CD4-positive, alpha-beta memory T cell (primary cell): ENCODE measurements at regions of chr3 and their contacts with region 1.

Region 1: DNA sequence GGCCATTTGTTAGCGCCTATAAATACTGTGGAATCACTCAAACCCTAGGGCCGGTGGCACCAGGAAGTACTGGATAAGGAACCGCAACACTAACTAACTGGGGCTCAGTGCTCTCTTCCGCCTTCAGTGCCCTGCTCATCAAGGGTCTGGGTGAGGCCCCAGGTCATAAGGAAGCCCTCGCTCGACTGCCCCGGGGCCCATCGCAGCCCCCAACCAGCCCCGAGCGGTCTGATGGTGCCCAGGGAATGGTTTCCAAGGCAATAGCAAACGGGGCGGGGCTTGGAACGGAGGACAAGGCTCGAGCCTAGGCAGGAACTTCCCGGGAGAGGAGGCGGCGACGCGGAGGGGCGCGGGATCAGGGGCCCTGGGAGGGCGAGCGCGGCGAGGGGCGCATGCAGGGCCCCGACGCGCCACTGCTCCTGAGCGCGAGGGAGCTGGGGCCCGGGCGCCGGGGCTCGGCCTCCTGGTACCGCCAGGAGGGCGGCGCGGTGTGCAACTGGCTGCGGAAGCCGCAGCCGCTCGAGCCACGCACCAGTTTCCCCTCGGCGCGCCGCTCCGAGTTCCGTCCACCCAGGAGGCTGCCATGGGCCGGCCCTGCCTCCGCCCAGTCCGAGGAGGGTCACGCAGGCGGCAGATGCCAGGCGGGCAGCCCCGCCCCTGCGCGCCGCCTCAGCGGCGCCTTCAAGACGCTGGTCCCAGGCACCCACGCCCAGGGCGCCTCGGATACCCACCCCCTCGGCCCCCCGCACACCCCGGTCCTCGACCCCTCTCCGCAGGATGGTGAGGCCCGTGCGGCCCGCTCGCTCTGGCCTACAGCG is at the start of gene TTLL3:
- DNase-seq: peak; percentile 34 to 62 (median 48)
- H3K4me3 ChIP-seq: peak within 1 kb of the TSS; percentile 72
- H3K4me3 Mint-ChIP-seq: peak within 1 kb of the TSS; percentile 91 to 94 (median 92)
- H3K27ac ChIP-seq: peak within 1 kb of the TSS; percentile 74
- H3K27ac Mint-ChIP-seq: peak within 1 kb of the TSS; percentile 87 to 99 (median 98)
- H3K4me1 ChIP-seq: peaks cover 27% of the 10 kb centered on the region
- H3K4me1 Mint-ChIP-seq: peaks cover 35 to 46% (median 41%) of the 10 kb centered on the region in 4 donors
- H3K27me3 ChIP-seq: no peaks in the 10 kb centered on the region
- H3K27me3 Mint-ChIP-seq: no peaks in the 10 kb centered on the region
- total RNA-seq, gene TTLL3: 81.4 to 91.7 TPM

Region 2: DNA sequence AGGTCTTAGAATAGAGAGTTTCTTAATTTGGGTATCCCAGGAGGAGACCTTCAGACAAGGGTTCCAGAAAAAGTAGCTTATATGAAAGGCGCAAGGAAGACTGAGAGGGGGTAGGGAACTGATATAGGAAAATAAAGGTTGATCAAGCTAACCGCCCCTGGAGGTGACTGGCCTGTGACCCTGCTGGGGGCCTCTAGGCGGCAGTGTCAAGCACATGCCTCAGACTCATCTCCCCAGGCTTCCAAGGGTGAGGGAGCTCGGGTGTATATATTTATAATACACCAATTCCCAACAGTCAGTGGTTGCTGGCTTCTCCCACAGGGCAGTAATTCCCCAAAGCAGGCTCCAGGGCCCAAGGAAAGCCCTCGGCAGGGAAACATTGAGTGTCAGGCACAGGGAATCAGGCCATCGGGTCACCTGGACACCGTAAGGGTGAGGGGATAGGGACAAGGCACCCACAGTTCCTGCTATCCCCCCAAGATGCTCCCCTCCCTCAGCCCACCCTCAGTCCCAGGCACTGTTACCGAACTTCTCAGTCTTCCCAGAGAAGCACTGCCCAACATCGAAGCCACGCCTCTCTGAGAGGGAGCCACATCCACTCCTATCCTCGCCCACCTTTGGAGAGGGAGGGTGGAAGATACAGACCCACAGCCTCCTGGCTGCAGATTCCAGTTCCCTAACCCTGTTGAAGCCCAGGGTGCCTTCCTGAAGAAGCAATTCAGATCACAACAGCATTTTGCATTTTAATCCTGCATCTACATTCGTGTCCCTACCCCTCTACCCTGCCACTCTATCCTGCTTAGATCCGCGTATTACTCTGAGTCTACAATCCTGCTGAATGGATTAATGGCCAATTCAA is 1095.7 kb before region 1 on chr3:
- CTCF ChIA-PET with region 1: no interaction called
- POLR2A ChIA-PET with region 1: no interaction called
- intact Hi-C with region 1: no loop called
- DNase-seq: no peak
- H3K4me3 ChIP-seq: no peak overlapping the region
- H3K4me3 Mint-ChIP-seq: no peak overlapping the region
- H3K27ac ChIP-seq: no peak overlapping the region
- H3K27ac Mint-ChIP-seq: no peak overlapping the region
- H3K4me1 ChIP-seq: no peaks in the 10 kb centered on the region
- H3K4me1 Mint-ChIP-seq: no peaks in the 10 kb centered on the region
- H3K27me3 ChIP-seq: no peaks in the 10 kb centered on the region
- H3K27me3 Mint-ChIP-seq: peaks cover 2 to 10% of the 10 kb centered on the region in 2 donors

Region 3: GRCh38 chr3:9749645-9750555 is 59.9 kb before region 1 on chr3 and contains the start of gene OGG1:
- CTCF ChIA-PET with region 1: interaction called, 4 read pairs
- POLR2A ChIA-PET with region 1: interaction called, 17 read pairs
- intact Hi-C with region 1: no loop called
- DNase-seq: peak; percentile 95 to 98 (median 96)
- H3K4me3 ChIP-seq: peak within 1 kb of the TSS; percentile 58 to 92
- H3K4me3 Mint-ChIP-seq: peak within 1 kb of the TSS; percentile 88 to 98 (median 96)
- H3K27ac ChIP-seq: peak within 1 kb of the TSS; percentile 59
- H3K27ac Mint-ChIP-seq: peak within 1 kb of the TSS; percentile 93 to 98 (median 95)
- H3K4me1 ChIP-seq: peaks cover 38% of the 10 kb centered on the region
- H3K4me1 Mint-ChIP-seq: peaks cover 25 to 54% (median 39%) of the 10 kb centered on the region in 4 donors
- H3K27me3 ChIP-seq: no peaks in the 10 kb centered on the region
- H3K27me3 Mint-ChIP-seq: no peaks in the 10 kb centered on the region
- total RNA-seq, gene OGG1: 40.4 to 46.9 TPM

Region 4: DNA sequence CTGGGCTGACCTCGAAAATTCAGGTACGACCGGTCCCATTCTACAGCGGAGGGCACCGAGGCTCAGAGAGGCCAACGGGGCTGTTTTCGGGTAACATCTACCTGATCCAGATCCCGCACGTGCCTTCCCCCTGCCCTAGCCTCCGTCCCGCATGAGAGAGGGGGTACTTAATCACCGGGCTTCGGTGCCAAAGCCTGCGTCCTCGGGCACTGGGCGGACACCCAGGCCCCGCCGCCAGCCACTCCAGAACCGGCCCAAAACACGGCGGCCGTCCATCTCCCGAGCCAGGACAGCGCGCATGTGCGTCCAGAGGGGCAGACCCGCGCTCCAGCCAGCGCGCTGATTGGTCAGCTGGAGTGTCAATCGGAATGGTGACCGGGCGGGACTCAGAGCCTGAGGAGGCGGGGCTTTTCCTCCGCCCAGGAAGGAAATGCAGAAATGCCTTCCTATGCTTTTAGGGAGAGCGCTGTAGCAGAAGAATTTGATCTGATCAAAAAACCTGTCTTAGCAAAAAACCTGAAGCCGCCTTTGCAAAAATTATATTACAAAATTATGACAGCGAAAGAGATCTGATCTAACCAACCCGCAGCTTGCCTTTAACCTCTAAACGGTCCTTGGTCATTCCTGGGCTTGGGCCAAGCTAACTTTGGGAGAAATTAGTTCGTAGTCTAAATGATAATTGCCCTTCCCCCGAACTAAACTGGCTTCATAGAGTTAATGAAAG is 34.1 kb after region 1 on chr3 and contains the start of gene RPUSD3:
- CTCF ChIA-PET with region 1: interaction called, 3 read pairs
- POLR2A ChIA-PET with region 1: interaction called, 7 read pairs
- intact Hi-C with region 1: loop called (anchors 1 kb)
- DNase-seq: peak; percentile 92 to 98 (median 93)
- H3K4me3 ChIP-seq: peak within 1 kb of the TSS; percentile 80 to 92
- H3K4me3 Mint-ChIP-seq: peak within 1 kb of the TSS; percentile 96 to 99 (median 97)
- H3K27ac ChIP-seq: peak within 1 kb of the TSS; percentile 65
- H3K27ac Mint-ChIP-seq: peak within 1 kb of the TSS; percentile 87 to 97 (median 92)
- H3K4me1 ChIP-seq: peaks cover 23% of the 10 kb centered on the region
- H3K4me1 Mint-ChIP-seq: peaks cover 10 to 36% (median 21%) of the 10 kb centered on the region in 4 donors
- H3K27me3 ChIP-seq: no peaks in the 10 kb centered on the region
- H3K27me3 Mint-ChIP-seq: no peaks in the 10 kb centered on the region
- total RNA-seq, gene RPUSD3: 63.3 to 67.6 TPM